ENCODE measurements at regions of chr18 and their contacts with region 1.

Region 1: GRCh38 chr18:3454365-3455089 is 4.6 kb downstream of the TGIF1 start:
- DNase-seq: peak; percentile 52 to 69
- H3K4me3 ChIP-seq: peak overlapping the region; percentile 15; the same call in 1 of the 2 replicates
- H3K4me3 Mint-ChIP-seq: peak overlapping the region; percentile 87
- H3K27ac Mint-ChIP-seq: peak overlapping the region; percentile 97
- H3K4me1 ChIP-seq: peaks cover 44% of the 10 kb centered on the region
- H3K4me1 Mint-ChIP-seq: peaks cover 39% of the 10 kb centered on the region
- H3K27me3 ChIP-seq: no peaks in the 10 kb centered on the region
- H3K27me3 Mint-ChIP-seq: no peaks in the 10 kb centered on the region
- CTCF ChIP-seq: peak; percentile 57 to 69

Region 2: GRCh38 chr18:3281456-3282400 is 172.8 kb before region 1 on chr18:
- CTCF ChIA-PET with region 1: interaction called, 3 read pairs
- POLR2A ChIA-PET with region 1: interaction called, 11 read pairs
- intact Hi-C with region 1: loop called (anchors 1 kb)
- DNase-seq: peak in 1 of 2 experiments; percentile 78
- H3K4me3 ChIP-seq: no peak overlapping the region
- H3K4me3 Mint-ChIP-seq: no peak overlapping the region
- H3K27ac Mint-ChIP-seq: no peak overlapping the region
- H3K4me1 ChIP-seq: no peaks in the 10 kb centered on the region
- H3K4me1 Mint-ChIP-seq: peaks cover 13% of the 10 kb centered on the region
- H3K27me3 ChIP-seq: no peaks in the 10 kb centered on the region
- H3K27me3 Mint-ChIP-seq: no peaks in the 10 kb centered on the region
- CTCF ChIP-seq: peak; percentile 33 to 66

Region 3: GRCh38 chr18:3593904-3594661 is 139.6 kb after region 1 on chr18:
- CTCF ChIA-PET with region 1: interaction called, 7 read pairs
- POLR2A ChIA-PET with region 1: interaction called, 8 read pairs
- intact Hi-C with region 1: loop called (anchors 1 kb)
- DNase-seq: peak; percentile 89 to 90
- H3K4me3 ChIP-seq: peak overlapping the region; percentile 39
- H3K4me3 Mint-ChIP-seq: peak overlapping the region; percentile 85
- H3K27ac Mint-ChIP-seq: peak overlapping the region; percentile 87
- H3K4me1 ChIP-seq: peaks cover 47% of the 10 kb centered on the region
- H3K4me1 Mint-ChIP-seq: peaks cover 47% of the 10 kb centered on the region
- H3K27me3 ChIP-seq: no peaks in the 10 kb centered on the region
- H3K27me3 Mint-ChIP-seq: no peaks in the 10 kb centered on the region
- CTCF ChIP-seq: peak; percentile 85 to 93

Region 4: GRCh38 chr18:3688699-3689098 is 234.2 kb after region 1 on chr18:
- CTCF ChIA-PET with region 1: no interaction called
- POLR2A ChIA-PET with region 1: no interaction called
- intact Hi-C with region 1: no loop called
- DNase-seq: peak; percentile 75 to 79
- H3K4me3 ChIP-seq: no peak overlapping the region
- H3K4me3 Mint-ChIP-seq: no peak overlapping the region
- H3K27ac Mint-ChIP-seq: peak overlapping the region; percentile 42
- H3K4me1 ChIP-seq: peaks cover 22% of the 10 kb centered on the region
- H3K4me1 Mint-ChIP-seq: peaks cover 6% of the 10 kb centered on the region
- H3K27me3 ChIP-seq: no peaks in the 10 kb centered on the region
- H3K27me3 Mint-ChIP-seq: no peaks in the 10 kb centered on the region
- CTCF ChIP-seq: no peak

Measured in Caco-2 (cell line).